ENCODE measurements at regions of chr2 and their contacts with region 1.

Region 1: GRCh38 chr2:30231212-30231995 is at the start of gene LBH:
- DNase-seq: peak; percentile 86 to 96 (median 90)
- ATAC-seq: peak; percentile 44 to 48
- H3K4me3 Mint-ChIP-seq: peak within 1 kb of the TSS; percentile 91 to 99 (median 95)
- H3K27ac Mint-ChIP-seq: peak within 1 kb of the TSS; percentile 83 to 100 (median 94)
- H3K4me1 Mint-ChIP-seq: peaks cover 31 to 65% (median 59%) of the 10 kb centered on the region in 4 donors
- H3K27me3 Mint-ChIP-seq: no peaks in the 10 kb centered on the region
- polyA plus RNA-seq, gene LBH: 243 to 356 (median 307) TPM

Region 2: GRCh38 chr2:28577791-28578680 is 1653.4 kb before region 1 on chr2:
- POLR2A ChIA-PET with region 1: no interaction called
- DNase-seq: no peak
- ATAC-seq: no peak
- H3K4me3 Mint-ChIP-seq: no peak overlapping the region
- H3K27ac Mint-ChIP-seq: no peak overlapping the region
- H3K4me1 Mint-ChIP-seq: peaks cover 0 to 2% (median 0%) of the 10 kb centered on the region in 4 donors
- H3K27me3 Mint-ChIP-seq: no peaks in the 10 kb centered on the region

Region 3: GRCh38 chr2:30146438-30147147 is 84.8 kb before region 1 on chr2 and contains the start of gene YPEL5:
- POLR2A ChIA-PET with region 1: interaction called, 111 read pairs
- DNase-seq: peak; percentile 95 to 100 (median 100)
- ATAC-seq: peak; percentile 81 to 82
- H3K4me3 Mint-ChIP-seq: peak within 1 kb of the TSS; percentile 81 to 95 (median 90)
- H3K27ac Mint-ChIP-seq: peak within 1 kb of the TSS; percentile 99 to 100 (median 100)
- H3K4me1 Mint-ChIP-seq: peaks cover 25 to 54% (median 50%) of the 10 kb centered on the region in 4 donors
- H3K27me3 Mint-ChIP-seq: no peaks in the 10 kb centered on the region
- polyA plus RNA-seq, gene YPEL5: 88.3 to 155 (median 103) TPM

Region 4: GRCh38 chr2:30208452-30208851 is 23.0 kb before region 1 on chr2:
- POLR2A ChIA-PET with region 1: interaction called, 323 read pairs
- DNase-seq: peak in 8 of 10 donors; percentile 11 to 64 (median 36)
- ATAC-seq: peak; percentile 21 to 69
- H3K4me3 Mint-ChIP-seq: peak overlapping the region; percentile 19 to 79 (median 58)
- H3K27ac Mint-ChIP-seq: peak overlapping the region in 9 of 10 donors; percentile 81 to 95 (median 93)
- H3K4me1 Mint-ChIP-seq: peaks cover 16 to 30% (median 25%) of the 10 kb centered on the region in 4 donors
- H3K27me3 Mint-ChIP-seq: no peaks in the 10 kb centered on the region

Region 5: GRCh38 chr2:30366199-30366691 is 134.8 kb after region 1 on chr2:
- POLR2A ChIA-PET with region 1: interaction called, 14 read pairs
- DNase-seq: peak in 8 of 10 donors; percentile 17 to 52 (median 34)
- ATAC-seq: peak; percentile 64 to 78
- H3K4me3 Mint-ChIP-seq: peak overlapping the region in 9 of 10 donors; percentile 8 to 68 (median 50)
- H3K27ac Mint-ChIP-seq: peak overlapping the region; percentile 58 to 94 (median 81)
- H3K4me1 Mint-ChIP-seq: peaks cover 36 to 61% (median 47%) of the 10 kb centered on the region in 4 donors
- H3K27me3 Mint-ChIP-seq: no peaks in the 10 kb centered on the region

Region 6: DNA sequence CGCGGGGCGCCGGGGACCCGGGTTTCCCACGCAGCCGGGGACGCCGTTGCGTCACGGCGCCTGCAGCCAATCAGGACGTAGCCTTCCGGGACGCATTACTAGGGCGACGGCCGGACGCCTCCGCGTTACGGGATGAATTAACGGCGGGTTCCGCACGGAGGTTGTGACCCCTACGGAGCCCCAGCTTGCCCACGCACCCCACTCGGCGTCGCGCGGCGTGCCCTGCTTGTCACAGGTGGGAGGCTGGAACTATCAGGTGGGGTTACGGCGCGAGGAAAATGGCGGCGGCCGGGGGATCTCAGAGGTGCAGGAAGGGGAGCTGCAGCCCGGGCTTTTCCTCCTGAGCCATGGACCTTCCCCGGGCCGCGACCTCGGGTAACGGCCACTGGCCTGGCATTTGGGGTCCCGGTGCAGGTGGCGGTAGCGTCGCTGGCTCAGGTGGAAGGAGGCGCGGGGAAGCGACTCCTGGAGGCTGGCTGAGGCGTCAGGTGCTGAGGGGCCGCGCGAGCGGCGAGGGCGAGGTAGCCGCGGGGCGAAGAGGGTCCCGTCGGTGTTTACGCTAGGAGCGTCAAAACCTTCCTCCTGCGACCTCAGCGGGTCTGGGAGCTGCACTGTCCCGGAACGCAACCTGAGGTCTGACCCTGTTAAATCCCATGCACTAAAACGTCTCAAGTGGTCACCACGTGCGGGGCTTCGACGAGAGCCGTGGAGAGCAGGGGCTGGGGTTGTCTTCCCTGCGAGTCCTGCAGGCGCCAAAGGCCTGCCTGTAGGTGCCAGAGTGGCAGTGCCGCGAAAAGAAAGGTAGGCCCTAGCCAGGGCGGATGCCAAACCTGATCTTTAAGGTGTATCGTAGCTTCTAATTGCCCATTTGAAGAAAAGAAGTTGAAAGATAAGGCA is 216.0 kb after region 1 on chr2 and contains the start of gene LCLAT1:
- POLR2A ChIA-PET with region 1: interaction called, 28 read pairs
- DNase-seq: peak; percentile 77 to 91 (median 88)
- ATAC-seq: peak; percentile 75 to 88
- H3K4me3 Mint-ChIP-seq: peak within 1 kb of the TSS; percentile 94 to 97 (median 96)
- H3K27ac Mint-ChIP-seq: peak within 1 kb of the TSS; percentile 89 to 99 (median 98)
- H3K4me1 Mint-ChIP-seq: peaks cover 22 to 54% (median 41%) of the 10 kb centered on the region in 4 donors
- H3K27me3 Mint-ChIP-seq: no peaks in the 10 kb centered on the region
- polyA plus RNA-seq, gene LCLAT1: 12.4 to 28.2 (median 13.7) TPM

Region 7: GRCh38 chr2:31174251-31174650 is 942.8 kb after region 1 on chr2:
- POLR2A ChIA-PET with region 1: no interaction called
- DNase-seq: no peak
- ATAC-seq: no peak
- H3K4me3 Mint-ChIP-seq: no peak overlapping the region
- H3K27ac Mint-ChIP-seq: no peak overlapping the region
- H3K4me1 Mint-ChIP-seq: peaks cover 0 to 5% (median 0%) of the 10 kb centered on the region in 4 donors
- H3K27me3 Mint-ChIP-seq: peaks cover 0 to 4% (median 0%) of the 10 kb centered on the region in 5 donors